ENCODE measurements at regions of chr16 and their contacts with region 1.

Region 1: GRCh38 chr16:4548124-4548523 is 8.0 kb upstream of the C16orf96 start:
- DNase-seq: no peak
- ATAC-seq: no peak
- H3K4me3 ChIP-seq: no peak overlapping the region
- H3K27ac ChIP-seq: no peak overlapping the region
- H3K4me1 ChIP-seq: peaks cover 0 to 5% of the 10 kb centered on the region in 2 experiments; a peak in 2 of 4 replicates
- H3K27me3 ChIP-seq: no peaks in the 10 kb centered on the region
- CTCF ChIP-seq: no peak
- POLR2A ChIP-seq: no peak
- RAD21 ChIP-seq: no peak

Region 2: GRCh38 chr16:4506450-4506849 is 41.7 kb before region 1 on chr16:
- CTCF ChIA-PET with region 1: interaction called, 3 read pairs
- POLR2A ChIA-PET with region 1: no interaction called
- RAD21 ChIA-PET with region 1: interaction called in 1 of 2 experiments, 3 read pairs
- intact Hi-C with region 1: loop called (anchors 1 kb)
- DNase-seq: peak; percentile 39
- ATAC-seq: peak; percentile 93
- H3K4me3 ChIP-seq: no peak overlapping the region
- H3K27ac ChIP-seq: no peak overlapping the region
- H3K4me1 ChIP-seq: peaks cover 0 to 10% of the 10 kb centered on the region in 2 experiments; a peak in 1 of 4 replicates
- H3K27me3 ChIP-seq: no peaks in the 10 kb centered on the region
- CTCF ChIP-seq: peak; percentile 70 to 84 (median 80)
- POLR2A ChIP-seq: no peak
- RAD21 ChIP-seq: peak; percentile 80

Region 3: GRCh38 chr16:4660454-4661007 is 112.4 kb after region 1 on chr16:
- CTCF ChIA-PET with region 1: no interaction called
- POLR2A ChIA-PET with region 1: no interaction called
- RAD21 ChIA-PET with region 1: no interaction called
- intact Hi-C with region 1: no loop called
- DNase-seq: no peak
- ATAC-seq: no peak
- H3K4me3 ChIP-seq: no peak overlapping the region
- H3K27ac ChIP-seq: no peak overlapping the region
- H3K4me1 ChIP-seq: 0 out of 4 replicates have a peak, but pooled peaks cover 0 to 10% of the 10 kb centered on the region in 2 experiments
- H3K27me3 ChIP-seq: no peaks in the 10 kb centered on the region
- CTCF ChIP-seq: no peak
- POLR2A ChIP-seq: no peak
- RAD21 ChIP-seq: no peak

Measured in HCT116 (cell line).